ENCODE measurements at regions of chr18 and their contacts with region 1.

Region 1: DNA sequence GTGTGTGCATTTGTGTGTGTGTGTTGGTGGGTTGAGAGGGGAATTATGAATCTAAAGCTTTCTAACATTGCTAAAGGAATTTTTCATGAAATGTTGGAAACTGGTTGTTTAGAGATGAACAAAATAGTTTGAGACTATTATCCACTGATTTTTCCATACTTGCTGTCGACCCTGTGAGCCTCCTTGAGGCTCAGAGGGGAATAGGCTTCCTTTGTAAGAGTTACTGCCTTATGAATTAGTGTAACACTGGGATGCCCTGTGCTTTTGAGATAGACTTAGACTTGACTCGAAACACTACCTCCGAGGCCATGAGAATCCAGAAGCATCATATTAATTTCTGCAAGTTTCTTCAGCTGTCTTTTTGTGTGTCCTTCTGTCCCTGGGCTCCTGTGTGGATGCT is 37.9 kb downstream of the AQP4 start:
- DNase-seq: no peak
- ATAC-seq: peak; percentile 60
- H3K4me3 Mint-ChIP-seq: no peak overlapping the region
- H3K27ac Mint-ChIP-seq: no peak overlapping the region
- H3K4me1 Mint-ChIP-seq: peaks cover 4% of the 10 kb centered on the region
- H3K27me3 Mint-ChIP-seq: peaks cover 4% of the 10 kb centered on the region; the same call in 1 of the 2 replicates
- CTCF ChIP-seq: no peak

Region 2: GRCh38 chr18:26863122-26863879 is 35.7 kb after region 1 on chr18:
- CTCF ChIA-PET with region 1: no interaction called
- POLR2A ChIA-PET with region 1: interaction called, 11 read pairs
- DNase-seq: peak; percentile 69
- ATAC-seq: peak; percentile 87
- H3K4me3 Mint-ChIP-seq: peak overlapping the region; percentile 69
- H3K27ac Mint-ChIP-seq: no peak overlapping the region
- H3K4me1 Mint-ChIP-seq: peaks cover 33% of the 10 kb centered on the region
- H3K27me3 Mint-ChIP-seq: peaks cover 11% of the 10 kb centered on the region
- CTCF ChIP-seq: no peak

Region 3: DNA sequence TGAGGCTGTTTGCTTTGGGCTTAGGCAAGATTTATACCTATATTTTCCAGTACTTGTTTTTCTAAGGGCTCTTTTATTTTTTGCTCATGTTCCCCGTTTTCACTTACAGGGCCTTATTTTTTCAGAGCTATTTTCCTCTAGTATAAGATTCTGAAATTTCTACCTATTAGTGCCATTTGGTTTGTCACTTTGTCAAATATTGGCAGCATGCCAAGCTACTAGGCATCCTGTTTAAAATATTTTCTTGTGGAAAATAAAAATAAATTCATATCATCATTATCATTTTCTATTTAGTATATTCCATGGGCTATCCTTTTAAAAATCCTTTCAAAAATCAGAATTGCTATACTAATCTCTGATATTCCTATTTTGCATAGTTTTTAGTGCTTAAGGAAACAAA is 422.4 kb after region 1 on chr18:
- CTCF ChIA-PET with region 1: no interaction called
- POLR2A ChIA-PET with region 1: no interaction called
- DNase-seq: no peak
- ATAC-seq: no peak
- H3K4me3 Mint-ChIP-seq: no peak overlapping the region
- H3K27ac Mint-ChIP-seq: no peak overlapping the region
- H3K4me1 Mint-ChIP-seq: peaks cover 8% of the 10 kb centered on the region; the same call in 1 of the 2 replicates
- H3K27me3 Mint-ChIP-seq: no peaks in the 10 kb centered on the region
- CTCF ChIP-seq: no peak

Measured in WTC11 (cell line).